Right ventricle myocardium superior (tissue), 1 donor: ENCODE measurements at regions of chr18 and their contacts with region 1.

Region 1: DNA sequence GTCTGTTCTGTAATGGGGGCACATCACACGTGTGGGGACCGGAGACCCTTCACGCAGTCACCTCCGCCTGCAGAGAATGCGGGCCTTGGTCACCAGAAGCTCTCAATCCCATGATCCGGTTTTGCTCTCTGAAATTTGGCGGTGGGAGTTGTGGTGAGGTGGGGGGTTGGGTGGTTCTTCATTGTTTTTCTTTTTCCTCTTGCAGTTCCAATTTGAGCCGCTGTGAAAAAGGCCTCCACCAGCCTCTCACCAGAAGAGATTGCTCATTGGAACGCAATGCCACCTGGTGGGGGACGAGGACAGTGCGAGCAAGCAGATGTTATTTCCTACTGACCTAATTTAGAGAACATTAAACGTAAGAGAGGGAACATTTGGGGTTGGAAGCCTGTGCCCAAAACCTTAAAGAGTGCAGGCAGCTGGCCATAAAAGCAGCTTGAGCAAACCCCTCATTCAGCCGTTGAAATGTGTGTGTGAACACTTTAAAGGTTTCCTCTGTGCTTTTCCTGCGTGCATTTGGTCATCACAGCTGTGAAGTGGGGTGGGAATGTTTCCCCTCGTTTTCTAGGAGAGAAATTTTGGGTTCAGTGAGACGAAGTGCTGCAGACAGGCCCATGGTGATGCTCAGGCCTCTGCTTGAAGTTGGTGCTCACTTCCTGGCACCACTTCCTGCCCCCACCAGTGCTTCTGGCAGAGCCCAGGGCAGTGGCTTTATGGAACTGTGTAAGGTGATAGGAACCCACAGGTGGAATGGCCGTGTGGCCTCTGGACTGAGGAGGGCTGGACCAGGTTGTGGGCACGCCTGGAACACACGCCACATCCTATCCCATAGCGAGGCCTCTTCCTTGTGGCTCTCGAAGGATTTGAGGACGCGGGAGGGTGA is 61.7 kb downstream of the ZCCHC2 start:
- DNase-seq: peak; percentile 88
- ATAC-seq: peak; percentile 92

Region 2: DNA sequence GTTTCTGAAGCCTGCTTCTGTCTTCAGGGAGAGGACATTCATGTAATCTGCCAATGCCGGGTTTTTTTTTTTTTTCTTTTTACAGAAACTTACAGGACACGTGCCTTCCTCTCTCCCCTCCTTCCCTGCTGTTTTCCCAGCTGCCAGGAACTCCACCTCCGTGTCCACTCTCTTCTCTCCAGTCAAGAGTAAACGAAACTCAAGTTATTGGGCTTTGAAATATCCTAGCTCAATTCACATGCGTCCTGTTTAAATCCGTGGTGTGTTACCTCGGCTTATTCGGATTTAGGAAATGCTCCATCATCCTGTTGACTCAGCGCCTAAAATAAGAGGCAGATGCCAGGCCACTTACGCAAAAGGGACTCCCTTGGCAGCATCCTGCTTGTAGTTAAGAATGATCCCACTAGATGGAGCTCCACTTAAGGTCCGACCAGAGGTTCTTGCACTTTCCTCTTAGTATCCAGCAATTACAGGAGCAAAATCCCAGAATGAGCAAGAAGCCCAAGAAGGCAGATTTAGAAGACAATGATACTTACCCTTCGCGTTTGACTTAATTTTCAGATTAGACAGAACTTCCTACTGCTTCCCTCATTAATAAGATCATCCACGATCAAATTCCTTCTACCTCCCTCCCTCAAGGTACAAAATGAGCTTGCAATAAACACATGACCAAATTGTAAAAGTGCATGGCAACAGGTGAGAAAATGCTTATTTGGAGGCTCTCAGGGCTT is 158.9 kb before region 1 on chr18:
- intact Hi-C with region 1: loop called (anchors 5 kb)
- DNase-seq: peak; percentile 63
- ATAC-seq: peak; percentile 94

Region 3: GRCh38 chr18:62522504-62523254 is 61.8 kb before region 1 on chr18 and contains the start of gene ZCCHC2:
- intact Hi-C with region 1: loop called (anchors 10 kb)
- DNase-seq: peak; percentile 99
- ATAC-seq: peak; percentile 87
- total RNA-seq, gene ZCCHC2: 16.1 TPM

Region 4: DNA sequence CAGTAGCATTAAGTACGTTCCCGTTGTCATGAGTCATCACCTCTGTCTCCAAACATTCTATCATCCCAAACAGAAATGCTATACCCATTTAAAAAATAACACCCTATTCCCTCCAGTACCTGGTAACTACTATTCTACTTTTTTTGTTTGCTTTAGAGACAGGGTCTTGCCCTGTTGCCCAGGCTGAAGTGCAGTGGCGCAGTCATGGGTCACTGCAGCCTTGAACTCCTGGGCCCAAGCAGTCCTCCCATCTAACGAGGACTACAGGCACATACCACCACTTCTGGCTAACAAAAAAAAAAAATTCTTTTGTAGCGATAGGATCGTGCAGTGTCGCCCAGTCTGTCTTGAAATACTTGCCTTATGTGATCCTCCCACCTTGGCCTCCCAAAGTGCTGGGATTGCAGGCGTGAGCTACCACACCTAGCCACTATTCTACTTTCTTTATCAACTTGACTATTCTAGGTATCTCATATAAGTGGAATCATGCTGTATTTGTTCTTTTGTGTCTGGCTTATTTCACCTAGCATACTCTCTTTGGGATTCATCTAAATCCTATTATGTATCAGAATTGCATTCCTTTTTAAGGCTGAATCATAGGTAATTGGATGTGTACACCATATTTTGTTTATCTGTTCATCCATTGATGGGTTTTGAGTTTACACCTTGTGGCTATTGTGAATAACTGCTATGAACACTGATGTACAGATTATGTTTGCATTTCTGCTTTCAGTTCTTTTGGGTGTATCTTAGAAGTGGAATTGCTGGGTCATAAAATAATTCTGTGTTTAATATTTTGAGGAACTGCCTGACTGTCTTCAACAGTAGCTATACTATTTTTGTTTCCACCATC is 47.2 kb before region 1 on chr18:
- intact Hi-C with region 1: no loop called
- DNase-seq: no peak
- ATAC-seq: no peak

Region 5: GRCh38 chr18:62714671-62715435 is 130.4 kb after region 1 on chr18:
- intact Hi-C with region 1: loop called (anchors 5 kb)
- DNase-seq: peak; percentile 99
- ATAC-seq: peak; percentile 96

Region 6: DNA sequence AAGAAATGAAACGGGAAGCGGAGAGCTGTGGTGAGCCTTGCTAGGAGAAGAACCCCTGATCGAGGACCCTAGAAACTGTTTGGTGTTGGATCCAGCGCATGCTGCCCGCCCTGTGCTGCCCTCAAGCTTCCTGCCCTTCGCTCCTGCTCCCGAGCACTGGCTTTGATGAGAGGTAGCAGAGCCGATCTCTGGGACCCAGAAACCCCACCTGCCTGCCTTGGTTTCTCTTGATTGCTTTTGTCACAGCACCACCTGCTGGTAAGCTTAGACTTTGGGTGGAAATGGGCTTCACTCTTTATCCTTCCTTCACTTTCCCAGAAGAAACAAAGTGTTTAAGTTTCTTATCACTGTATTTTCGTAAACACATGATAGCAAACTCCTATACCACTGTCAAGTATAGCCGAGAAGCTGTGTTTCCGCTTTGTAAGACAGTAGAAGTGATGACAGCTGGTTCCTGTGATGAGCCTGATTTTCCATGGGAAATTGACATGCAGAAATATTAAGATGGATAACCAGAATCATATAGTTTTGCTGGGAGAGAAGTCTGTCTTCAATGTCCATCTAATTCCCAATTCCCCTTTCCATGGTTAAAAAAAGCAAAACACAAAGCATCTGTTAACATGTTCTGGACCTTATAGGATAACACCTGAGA is 398.2 kb after region 1 on chr18:
- intact Hi-C with region 1: loop called (anchors 5 kb)
- DNase-seq: no peak
- ATAC-seq: peak; percentile 85